Activated T-helper 2 cell treated with anti-CD3 and anti-CD28 coated beads, Interferon-gamma antibody, Interleukin-2, Interleukin-4, amounts not matched to agents 10 μg/mL and 5 μg/mL and 100 μg/mL, durations not matched to agents 14 hours and 24 hours and 36 hours (primary cell): ENCODE measurements at regions of chr9 and their contacts with region 1.

Region 1: DNA sequence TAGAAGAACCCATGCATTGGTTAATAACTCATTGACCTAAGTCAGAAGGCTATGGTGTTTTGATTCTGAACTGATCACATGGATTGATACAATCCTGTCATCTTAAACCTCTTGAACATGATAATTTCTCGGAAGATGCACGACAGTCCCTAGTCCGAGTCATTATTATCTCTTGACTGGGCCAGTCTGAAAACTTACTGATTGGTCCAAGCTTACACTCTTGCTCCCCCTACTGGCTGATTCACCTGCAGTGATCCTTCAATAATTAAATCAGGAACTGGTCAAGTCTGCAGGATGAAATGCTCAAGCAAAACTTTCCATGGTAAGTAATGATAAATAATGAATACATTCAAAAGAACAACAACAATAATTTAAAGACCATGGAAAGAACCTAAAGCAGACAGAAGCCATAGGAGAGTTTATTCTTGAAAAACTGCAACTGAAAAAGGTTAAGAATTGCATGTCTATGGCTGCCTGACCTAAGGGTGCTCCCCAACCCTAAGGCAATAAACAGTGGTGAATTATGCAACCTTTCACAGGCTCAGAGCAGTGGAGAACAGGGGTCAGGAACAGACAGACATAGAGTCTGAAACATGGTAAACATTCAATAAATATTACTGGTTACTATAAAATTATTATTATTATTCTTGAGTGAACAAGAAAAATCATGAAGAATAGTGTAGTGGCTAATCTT is 79.3 kb downstream of the BRINP1 start:
- DNase-seq: no peak
- H3K4me3 Mint-ChIP-seq: no peak overlapping the region
- H3K27ac Mint-ChIP-seq: no peak overlapping the region
- H3K4me1 Mint-ChIP-seq: no peaks in the 10 kb centered on the region
- H3K27me3 Mint-ChIP-seq: no peaks in the 10 kb centered on the region

Region 2: GRCh38 chr9:118522093-118523028 is 767.5 kb before region 1 on chr9:
- intact Hi-C with region 1: loop called (anchors 2 kb)
- DNase-seq: peak; percentile 8
- H3K4me3 Mint-ChIP-seq: no peak overlapping the region
- H3K27ac Mint-ChIP-seq: no peak overlapping the region
- H3K4me1 Mint-ChIP-seq: no peaks in the 10 kb centered on the region
- H3K27me3 Mint-ChIP-seq: no peaks in the 10 kb centered on the region